ENCODE measurements at regions of chr4 and their contacts with region 1.

Region 1: GRCh38 chr4:173420324-173420752 is 21.4 kb upstream of the SCRG1 start:
- DNase-seq: no peak
- ATAC-seq: peak; percentile 45
- H3K4me3 ChIP-seq: no peak overlapping the region
- H3K4me1 ChIP-seq: no peaks in the 10 kb centered on the region
- CTCF ChIP-seq: no peak

Region 2: DNA sequence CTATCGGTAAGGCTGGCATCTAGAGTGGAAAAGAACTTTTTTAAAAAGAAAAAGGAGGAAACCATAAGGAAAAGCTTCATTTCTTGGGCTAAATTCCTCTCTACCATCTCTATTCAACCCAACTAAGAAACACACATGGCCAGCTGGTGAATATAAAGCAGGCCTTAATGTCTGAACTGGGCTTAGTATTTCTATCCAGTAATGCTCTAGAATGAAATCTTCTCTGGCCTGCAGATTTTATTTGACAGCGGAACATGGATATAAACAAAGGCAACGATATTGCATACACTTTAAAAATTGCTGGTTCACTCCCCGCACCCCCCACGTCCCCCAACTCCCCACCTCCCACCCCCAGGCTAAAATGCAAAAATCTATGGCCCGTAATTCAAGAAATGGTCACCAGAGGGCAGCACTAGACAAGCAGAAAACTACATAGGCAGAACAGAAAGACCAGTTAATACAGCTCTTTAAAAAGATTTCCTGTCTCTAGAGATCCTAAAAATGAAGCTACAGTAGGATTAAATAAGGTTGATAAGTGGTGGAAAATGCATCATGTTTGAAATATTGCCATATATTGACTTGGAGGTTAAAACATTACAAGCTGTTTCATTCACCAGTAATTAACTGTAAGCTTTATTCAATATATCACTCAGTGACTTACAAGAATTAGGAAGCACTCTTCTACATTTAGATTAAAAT is 407.0 kb before region 1 on chr4:
- intact Hi-C with region 1: loop called in 1 of 2 experiments (anchors 5 kb)
- DNase-seq: peak in 1 of 3 donors; percentile 75
- ATAC-seq: peak; percentile 79
- H3K4me3 ChIP-seq: no peak overlapping the region
- H3K4me1 ChIP-seq: no peaks in the 10 kb centered on the region
- CTCF ChIP-seq: peak; percentile 45

Region 3: DNA sequence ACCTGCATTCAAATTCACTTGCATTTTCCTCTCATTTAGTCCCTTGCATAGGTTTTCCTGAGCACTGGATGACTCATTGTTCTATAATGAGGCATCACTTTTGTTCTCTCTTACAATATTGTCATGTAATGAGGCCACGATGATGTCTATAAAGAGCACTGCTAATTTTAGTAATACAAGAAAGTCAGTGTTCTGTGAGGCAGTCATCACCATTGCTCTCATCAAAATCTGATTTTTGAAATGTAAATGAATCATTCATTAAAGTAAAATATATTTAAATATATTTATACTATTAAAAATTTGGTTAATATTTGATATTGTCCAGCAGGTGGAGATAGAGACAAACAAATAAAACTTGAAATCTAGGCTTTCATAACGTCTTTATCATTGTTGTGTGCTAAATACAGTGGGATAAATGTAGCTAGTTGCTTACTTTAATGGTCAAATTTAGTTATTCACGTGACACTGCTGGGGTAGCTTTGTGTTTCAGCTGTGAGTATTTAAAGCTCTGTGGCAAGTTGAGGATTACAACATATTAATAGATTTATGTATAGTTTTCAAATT is 101.6 kb before region 1 on chr4:
- intact Hi-C with region 1: loop called in 1 of 2 experiments (anchors 10 kb)
- DNase-seq: no peak
- ATAC-seq: no peak
- H3K4me3 ChIP-seq: no peak overlapping the region
- H3K4me1 ChIP-seq: no peaks in the 10 kb centered on the region
- CTCF ChIP-seq: no peak

Region 4: DNA sequence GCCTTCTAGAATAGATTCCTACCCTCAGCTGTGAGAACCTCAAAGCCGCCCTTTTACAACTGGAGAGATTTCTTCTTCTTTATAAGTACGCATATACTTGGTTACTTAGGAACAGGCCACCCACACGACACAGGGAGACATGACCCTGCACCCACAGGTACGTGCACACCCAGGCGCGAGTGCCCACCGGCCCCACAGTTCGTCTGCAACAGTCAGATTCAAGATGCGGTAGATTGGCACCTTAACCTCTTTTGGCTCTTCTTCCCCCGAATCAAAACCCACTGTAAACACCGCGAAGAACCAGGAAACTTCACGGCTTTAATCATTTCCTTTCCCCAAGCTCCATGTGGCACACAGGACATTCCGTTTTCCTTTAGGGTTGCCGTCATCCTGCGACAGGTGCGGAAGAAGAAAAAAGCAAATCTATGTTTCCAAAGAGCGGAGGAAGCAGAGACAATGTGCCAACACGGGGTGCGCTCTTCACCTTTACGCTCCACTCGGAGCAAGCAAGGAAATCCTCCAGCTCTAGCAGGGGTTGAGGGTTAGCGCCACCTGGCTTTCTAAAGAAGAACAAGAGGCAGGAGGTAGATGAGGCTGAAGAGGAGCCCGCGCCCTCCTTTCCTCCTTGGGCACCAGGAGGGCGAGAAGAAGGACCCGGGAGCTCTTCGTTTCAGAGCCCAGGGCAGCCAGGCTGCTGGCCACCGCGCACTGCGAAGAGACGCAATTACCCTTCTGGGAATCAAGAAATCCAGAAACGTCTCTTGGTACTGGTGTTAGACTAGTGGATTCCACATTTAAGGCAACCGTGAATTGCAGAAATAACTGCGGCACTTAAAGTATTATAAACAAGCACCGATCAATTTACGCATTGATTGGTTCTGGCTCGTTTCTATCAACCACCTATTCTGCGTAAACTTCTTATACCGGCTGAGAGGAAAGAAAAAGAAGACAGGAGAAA is 74.0 kb after region 1 on chr4:
- intact Hi-C with region 1: loop called (anchors 5 to 10 kb)
- DNase-seq: peak in 2 of 3 donors; percentile 52 to 77
- ATAC-seq: peak; percentile 96
- H3K4me3 ChIP-seq: no peak overlapping the region
- H3K4me1 ChIP-seq: no peaks in the 10 kb centered on the region
- CTCF ChIP-seq: peak; percentile 60

Measured in mucosa of descending colon (tissue), 3 donors.